CD8-positive, alpha-beta memory T cell (primary cell): ENCODE measurements at regions of chr6 and their contacts with region 1.

Region 1: GRCh38 chr6:63635588-63636517 is at the start of gene PHF3:
- DNase-seq: peak; percentile 87 to 94 (median 93)
- H3K4me3 ChIP-seq: peak within 1 kb of the TSS; percentile 88
- H3K4me3 Mint-ChIP-seq: peak within 1 kb of the TSS; percentile 94 to 100 (median 99)
- H3K27ac ChIP-seq: peak within 1 kb of the TSS; percentile 93
- H3K27ac Mint-ChIP-seq: peak within 1 kb of the TSS; percentile 96 to 100 (median 99)
- H3K4me1 ChIP-seq: peaks cover 46% of the 10 kb centered on the region
- H3K4me1 Mint-ChIP-seq: peaks cover 48 to 54% (median 54%) of the 10 kb centered on the region in 3 donors
- H3K27me3 ChIP-seq: no peaks in the 10 kb centered on the region
- H3K27me3 Mint-ChIP-seq: peaks cover 0 to 4% of the 10 kb centered on the region in 2 donors
- total RNA-seq, gene PHF3: 44.1 to 44.3 TPM

Region 2: DNA sequence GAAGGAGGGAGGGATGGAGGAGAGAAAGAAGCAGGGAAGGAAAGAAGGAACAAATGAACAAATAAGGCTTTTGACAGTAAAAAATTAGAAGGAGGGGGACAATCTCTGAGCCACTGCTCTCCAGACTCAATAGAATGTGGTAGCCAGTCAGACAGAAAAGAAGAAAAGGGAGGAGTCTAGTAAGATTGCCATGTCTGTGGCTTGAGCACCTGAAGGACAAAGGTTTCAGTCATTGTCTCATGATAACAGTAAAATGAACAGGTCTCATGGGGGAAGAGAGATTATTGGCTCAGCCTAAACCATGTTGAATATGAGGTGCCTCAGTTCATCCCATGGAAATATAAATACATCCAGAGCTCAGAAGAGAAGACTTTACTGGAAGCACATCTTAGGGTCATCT is 77.6 kb before region 1 on chr6:
- CTCF ChIA-PET with region 1: no interaction called
- POLR2A ChIA-PET with region 1: no interaction called
- DNase-seq: no peak
- H3K4me3 ChIP-seq: no peak overlapping the region
- H3K4me3 Mint-ChIP-seq: no peak overlapping the region
- H3K27ac ChIP-seq: no peak overlapping the region
- H3K27ac Mint-ChIP-seq: no peak overlapping the region
- H3K4me1 ChIP-seq: no peaks in the 10 kb centered on the region
- H3K4me1 Mint-ChIP-seq: no peaks in the 10 kb centered on the region
- H3K27me3 ChIP-seq: no peaks in the 10 kb centered on the region
- H3K27me3 Mint-ChIP-seq: peaks cover 2 to 61% of the 10 kb centered on the region in 2 donors

Region 3: GRCh38 chr6:63573140-63573898 is 62.5 kb before region 1 on chr6:
- CTCF ChIA-PET with region 1: interaction called, 22 read pairs
- POLR2A ChIA-PET with region 1: interaction called, 28 read pairs
- DNase-seq: peak; percentile 55 to 81 (median 73)
- H3K4me3 ChIP-seq: peak overlapping the region; percentile 91
- H3K4me3 Mint-ChIP-seq: peak overlapping the region; percentile 89 to 100 (median 93)
- H3K27ac ChIP-seq: peak overlapping the region; percentile 87
- H3K27ac Mint-ChIP-seq: peak overlapping the region; percentile 90 to 100 (median 98)
- H3K4me1 ChIP-seq: peaks cover 25% of the 10 kb centered on the region
- H3K4me1 Mint-ChIP-seq: peaks cover 31 to 46% (median 43%) of the 10 kb centered on the region in 3 donors
- H3K27me3 ChIP-seq: no peaks in the 10 kb centered on the region
- H3K27me3 Mint-ChIP-seq: peaks cover 0 to 4% of the 10 kb centered on the region in 2 donors

Region 4: GRCh38 chr6:63589927-63590411 is 45.9 kb before region 1 on chr6:
- CTCF ChIA-PET with region 1: no interaction called
- POLR2A ChIA-PET with region 1: no interaction called
- DNase-seq: no peak
- H3K4me3 ChIP-seq: no peak overlapping the region
- H3K4me3 Mint-ChIP-seq: no peak overlapping the region
- H3K27ac ChIP-seq: no peak overlapping the region
- H3K27ac Mint-ChIP-seq: no peak overlapping the region
- H3K4me1 ChIP-seq: no peaks in the 10 kb centered on the region
- H3K4me1 Mint-ChIP-seq: no peaks in the 10 kb centered on the region
- H3K27me3 ChIP-seq: no peaks in the 10 kb centered on the region
- H3K27me3 Mint-ChIP-seq: peaks cover 7 to 29% of the 10 kb centered on the region in 2 donors

Region 5: DNA sequence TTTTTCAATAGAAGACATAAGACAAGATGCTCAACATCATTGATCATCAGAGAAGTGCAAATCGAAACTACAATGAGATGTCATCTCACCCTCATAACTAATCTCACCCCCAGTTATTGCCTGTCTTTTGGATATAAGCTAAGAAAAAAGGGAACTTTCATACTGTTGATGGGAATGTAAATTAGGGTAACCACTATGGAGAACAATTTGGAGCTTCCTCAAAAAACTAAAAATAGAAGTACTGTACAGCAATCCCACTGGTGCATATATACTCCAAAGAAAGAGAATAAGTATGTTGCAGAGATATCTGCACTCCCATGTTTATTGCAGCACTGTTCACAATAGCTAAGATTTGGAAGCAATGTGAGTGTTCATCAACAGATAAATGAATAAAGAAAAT is 26.6 kb before region 1 on chr6:
- CTCF ChIA-PET with region 1: no interaction called
- POLR2A ChIA-PET with region 1: no interaction called
- DNase-seq: no peak
- H3K4me3 ChIP-seq: no peak overlapping the region
- H3K4me3 Mint-ChIP-seq: no peak overlapping the region
- H3K27ac ChIP-seq: no peak overlapping the region
- H3K27ac Mint-ChIP-seq: no peak overlapping the region
- H3K4me1 ChIP-seq: no peaks in the 10 kb centered on the region
- H3K4me1 Mint-ChIP-seq: no peaks in the 10 kb centered on the region
- H3K27me3 ChIP-seq: no peaks in the 10 kb centered on the region
- H3K27me3 Mint-ChIP-seq: peaks cover 3 to 12% of the 10 kb centered on the region in 2 donors